Right ventricle myocardium superior (tissue), 1 donor: ENCODE measurements at regions of chr3 and their contacts with region 1.

Region 1: GRCh38 chr3:128787256-128788240 is 61.6 kb downstream of the RAB7A start:
- DNase-seq: no peak
- ATAC-seq: no peak

Region 2: GRCh38 chr3:128845778-128846485 is 58.4 kb after region 1 on chr3:
- intact Hi-C with region 1: loop called (anchors 10 kb)
- DNase-seq: peak; percentile 94
- ATAC-seq: peak; percentile 96